CD8-positive, alpha-beta T cell (primary cell): ENCODE measurements at regions of chr10 and their contacts with region 1.

Region 1: GRCh38 chr10:100433253-100434240 is 29.3 kb upstream of the WNT8B start:
- DNase-seq: peak; percentile 90 to 99 (median 93)
- ATAC-seq: peak; percentile 100
- H3K4me3 ChIP-seq: no peak overlapping the region
- H3K4me3 Mint-ChIP-seq: no peak overlapping the region
- H3K27ac ChIP-seq: no peak overlapping the region
- H3K27ac Mint-ChIP-seq: no peak overlapping the region
- H3K4me1 ChIP-seq: no peaks in the 10 kb centered on the region
- H3K4me1 Mint-ChIP-seq: peaks cover 2% of the 10 kb centered on the region
- H3K27me3 ChIP-seq: no peaks in the 10 kb centered on the region
- H3K27me3 Mint-ChIP-seq: no peaks in the 10 kb centered on the region
- CTCF ChIP-seq: peak; percentile 98

Region 2: DNA sequence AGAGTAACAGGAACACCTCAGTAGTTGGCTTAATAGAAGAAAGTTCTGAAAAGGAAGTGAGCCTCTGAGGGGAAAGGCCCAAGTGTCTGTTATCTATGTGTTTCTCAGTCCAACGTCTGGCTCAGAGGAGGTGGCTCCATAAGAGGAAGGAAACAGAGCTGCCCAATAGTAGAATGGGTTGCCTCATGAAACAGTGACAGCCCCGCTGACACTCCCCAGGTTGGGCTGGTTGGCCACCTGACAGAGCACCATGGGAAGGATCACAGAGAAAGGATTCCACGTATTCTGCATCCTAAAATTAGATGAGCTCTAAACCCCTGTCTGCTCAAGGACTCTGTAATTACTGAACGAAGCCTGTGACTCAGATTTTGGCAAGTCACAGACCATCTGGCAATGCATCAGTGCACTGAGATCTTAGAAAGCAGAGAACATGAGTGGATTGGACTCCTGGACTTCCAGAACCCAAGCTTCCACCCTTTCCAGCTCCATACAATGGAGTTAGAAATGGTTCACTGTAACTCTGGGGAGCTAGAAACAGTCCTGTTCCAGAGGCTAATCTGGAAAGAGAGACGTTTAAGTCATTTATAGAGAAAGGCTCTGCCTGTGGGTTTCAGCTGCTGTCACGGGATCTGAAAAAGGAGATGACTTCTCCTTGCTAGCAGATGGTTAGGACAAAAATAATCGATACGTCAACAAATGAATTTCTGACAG is 106.4 kb before region 1 on chr10:
- CTCF ChIA-PET with region 1: interaction called, 225 read pairs
- POLR2A ChIA-PET with region 1: no interaction called
- intact Hi-C with region 1: no loop called
- DNase-seq: peak in 1 of 9 experiments; percentile 62
- ATAC-seq: peak; percentile 89
- H3K4me3 ChIP-seq: no peak overlapping the region
- H3K4me3 Mint-ChIP-seq: no peak overlapping the region
- H3K27ac ChIP-seq: no peak overlapping the region
- H3K27ac Mint-ChIP-seq: peak overlapping the region; percentile 75
- H3K4me1 ChIP-seq: peaks cover 15% of the 10 kb centered on the region
- H3K4me1 Mint-ChIP-seq: peaks cover 10% of the 10 kb centered on the region
- H3K27me3 ChIP-seq: peaks cover 0 to 4% of the 10 kb centered on the region in 2 experiments
- H3K27me3 Mint-ChIP-seq: peaks cover 11% of the 10 kb centered on the region
- CTCF ChIP-seq: no peak

Region 3: DNA sequence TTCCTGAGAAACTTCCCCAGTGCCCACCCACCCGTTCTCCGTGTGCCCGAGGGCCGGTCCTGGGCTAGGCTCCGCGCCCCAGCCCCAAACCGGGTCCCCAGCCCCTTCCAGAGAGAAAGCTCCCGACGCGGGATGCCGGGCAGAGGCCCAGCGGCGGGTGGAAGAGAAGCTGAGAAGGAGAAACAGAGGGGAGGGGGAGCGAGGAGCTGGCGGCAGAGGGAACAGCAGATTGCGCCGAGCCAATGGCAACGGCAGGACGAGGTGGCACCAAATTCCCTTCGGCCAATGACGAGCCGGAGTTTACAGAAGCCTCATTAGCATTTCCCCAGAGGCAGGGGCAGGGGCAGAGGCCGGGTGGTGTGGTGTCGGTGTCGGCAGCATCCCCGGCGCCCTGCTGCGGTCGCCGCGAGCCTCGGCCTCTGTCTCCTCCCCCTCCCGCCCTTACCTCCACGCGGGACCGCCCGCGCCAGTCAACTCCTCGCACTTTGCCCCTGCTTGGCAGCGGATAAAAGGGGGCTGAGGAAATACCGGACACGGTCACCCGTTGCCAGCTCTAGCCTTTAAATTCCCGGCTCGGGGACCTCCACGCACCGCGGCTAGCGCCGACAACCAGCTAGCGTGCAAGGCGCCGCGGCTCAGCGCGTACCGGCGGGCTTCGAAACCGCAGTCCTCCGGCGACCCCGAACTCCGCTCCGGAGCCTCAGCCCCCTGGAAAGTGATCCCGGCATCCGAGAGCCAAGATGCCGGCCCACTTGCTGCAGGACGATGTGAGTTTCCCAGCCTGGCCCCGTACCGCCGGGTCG is 86.6 kb before region 1 on chr10 and contains the start of gene SCD:
- CTCF ChIA-PET with region 1: interaction called, 225 read pairs
- POLR2A ChIA-PET with region 1: interaction called, 6 read pairs
- intact Hi-C with region 1: loop called (anchors 1 kb)
- DNase-seq: peak; percentile 46 to 91 (median 72)
- ATAC-seq: peak; percentile 86
- H3K4me3 ChIP-seq: peak within 1 kb of the TSS; percentile 63 to 79
- H3K4me3 Mint-ChIP-seq: peak within 1 kb of the TSS; percentile 93
- H3K27ac ChIP-seq: peak within 1 kb of the TSS in 1 of 2 experiments; percentile 36
- H3K27ac Mint-ChIP-seq: peak within 1 kb of the TSS; percentile 60
- H3K4me1 ChIP-seq: peaks cover 6% of the 10 kb centered on the region
- H3K4me1 Mint-ChIP-seq: peaks cover 31% of the 10 kb centered on the region
- H3K27me3 ChIP-seq: no peaks in the 10 kb centered on the region
- H3K27me3 Mint-ChIP-seq: no peaks in the 10 kb centered on the region
- CTCF ChIP-seq: no peak
- total RNA-seq, gene SCD: 5.4 TPM

Region 4: GRCh38 chr10:100373298-100374136 is 60.0 kb before region 1 on chr10:
- CTCF ChIA-PET with region 1: interaction called, 7 read pairs
- POLR2A ChIA-PET with region 1: no interaction called
- intact Hi-C with region 1: loop called in 1 of 2 experiments (anchors 1 kb)
- DNase-seq: peak; percentile 66 to 93 (median 84)
- ATAC-seq: peak; percentile 63
- H3K4me3 ChIP-seq: peak overlapping the region; percentile 74 to 91
- H3K4me3 Mint-ChIP-seq: no peak overlapping the region
- H3K27ac ChIP-seq: peak overlapping the region; percentile 90 to 94
- H3K27ac Mint-ChIP-seq: no peak overlapping the region
- H3K4me1 ChIP-seq: peaks cover 44% of the 10 kb centered on the region
- H3K4me1 Mint-ChIP-seq: peaks cover 31% of the 10 kb centered on the region
- H3K27me3 ChIP-seq: no peaks in the 10 kb centered on the region
- H3K27me3 Mint-ChIP-seq: no peaks in the 10 kb centered on the region
- CTCF ChIP-seq: no peak

Region 5: DNA sequence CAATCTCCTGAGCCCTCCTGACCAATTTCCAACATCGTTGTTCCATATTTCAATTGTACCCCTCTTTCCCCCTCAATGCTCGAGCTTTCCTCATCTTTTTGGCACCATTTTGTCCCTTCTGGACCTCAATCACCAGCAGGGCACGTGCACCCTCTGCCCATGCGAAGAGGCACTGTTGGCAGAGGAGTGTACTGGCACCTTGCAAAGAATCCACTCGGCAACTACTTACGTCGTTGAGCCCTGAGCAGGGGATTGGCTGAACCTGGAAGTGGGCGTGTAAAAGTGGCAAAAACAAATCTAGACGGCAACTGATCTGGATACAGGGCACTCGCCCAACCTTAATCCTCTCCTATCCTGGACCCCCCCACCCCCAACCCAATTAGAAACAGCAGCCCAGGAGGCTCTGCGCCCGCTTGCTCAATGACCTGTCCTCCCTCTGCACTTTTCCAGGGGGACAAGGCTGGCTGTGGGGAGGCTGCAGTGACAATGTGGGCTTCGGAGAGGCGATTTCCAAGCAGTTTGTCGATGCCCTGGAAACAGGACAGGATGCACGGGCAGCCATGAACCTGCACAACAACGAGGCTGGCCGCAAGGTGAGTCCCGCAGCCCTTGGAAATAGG is 48.0 kb after region 1 on chr10:
- CTCF ChIA-PET with region 1: interaction called, 13 read pairs
- POLR2A ChIA-PET with region 1: no interaction called
- intact Hi-C with region 1: loop called (anchors 1 to 5 kb)
- DNase-seq: peak; percentile 85 to 98 (median 90)
- ATAC-seq: peak; percentile 97
- H3K4me3 ChIP-seq: peak overlapping the region; percentile 61 to 74
- H3K4me3 Mint-ChIP-seq: peak overlapping the region; percentile 87
- H3K27ac ChIP-seq: peak overlapping the region in 1 of 2 experiments; percentile 21
- H3K27ac Mint-ChIP-seq: no peak overlapping the region
- H3K4me1 ChIP-seq: peaks cover 10% of the 10 kb centered on the region
- H3K4me1 Mint-ChIP-seq: peaks cover 19% of the 10 kb centered on the region
- H3K27me3 ChIP-seq: no peaks in the 10 kb centered on the region
- H3K27me3 Mint-ChIP-seq: peaks cover 22% of the 10 kb centered on the region
- CTCF ChIP-seq: no peak

Region 6: DNA sequence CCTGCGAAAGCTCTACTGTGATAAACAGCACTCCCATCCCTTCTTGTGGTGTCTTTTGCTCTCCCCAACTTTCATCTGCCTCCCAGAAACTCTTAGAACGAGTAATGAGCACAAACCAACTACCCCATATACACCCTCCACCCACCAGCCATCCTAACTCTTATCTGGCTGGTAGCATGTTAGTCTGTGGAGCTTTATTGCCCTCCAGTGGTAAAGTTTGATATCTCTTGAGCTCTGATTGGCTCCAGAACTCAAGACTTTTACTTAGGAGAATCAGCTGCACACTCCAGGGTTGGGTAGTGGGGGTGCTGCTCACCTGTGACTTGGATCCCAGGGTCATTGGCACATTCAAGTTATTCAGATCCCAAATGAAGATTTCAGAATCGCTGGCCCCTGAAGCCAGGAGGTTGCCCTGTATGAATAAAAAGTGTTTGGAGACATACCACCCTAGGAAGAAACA is 75.2 kb after region 1 on chr10:
- CTCF ChIA-PET with region 1: interaction called, 298 read pairs
- POLR2A ChIA-PET with region 1: no interaction called
- intact Hi-C with region 1: loop called (anchors 1 kb)
- DNase-seq: peak in 6 of 9 experiments; percentile 40 to 85 (median 50)
- ATAC-seq: peak; percentile 45
- H3K4me3 ChIP-seq: peak overlapping the region in 1 of 2 experiments; percentile 10
- H3K4me3 Mint-ChIP-seq: peak overlapping the region; percentile 66
- H3K27ac ChIP-seq: peak overlapping the region; percentile 25 to 62
- H3K27ac Mint-ChIP-seq: peak overlapping the region; percentile 94
- H3K4me1 ChIP-seq: peaks cover 63% of the 10 kb centered on the region
- H3K4me1 Mint-ChIP-seq: peaks cover 73% of the 10 kb centered on the region
- H3K27me3 ChIP-seq: no peaks in the 10 kb centered on the region
- H3K27me3 Mint-ChIP-seq: no peaks in the 10 kb centered on the region
- CTCF ChIP-seq: peak; percentile 76

Region 7: GRCh38 chr10:100529475-100530298 is 96.1 kb after region 1 on chr10 and contains the start of gene NDUFB8:
- CTCF ChIA-PET with region 1: interaction called, 298 read pairs
- POLR2A ChIA-PET with region 1: no interaction called
- intact Hi-C with region 1: no loop called
- DNase-seq: peak; percentile 74 to 92 (median 87)
- ATAC-seq: peak; percentile 84
- H3K4me3 ChIP-seq: peak within 1 kb of the TSS; percentile 81 to 99
- H3K4me3 Mint-ChIP-seq: peak within 1 kb of the TSS; percentile 99
- H3K27ac ChIP-seq: peak within 1 kb of the TSS; percentile 77 to 83
- H3K27ac Mint-ChIP-seq: peak within 1 kb of the TSS; percentile 93
- H3K4me1 ChIP-seq: peaks cover 35% of the 10 kb centered on the region
- H3K4me1 Mint-ChIP-seq: peaks cover 38% of the 10 kb centered on the region
- H3K27me3 ChIP-seq: no peaks in the 10 kb centered on the region
- H3K27me3 Mint-ChIP-seq: no peaks in the 10 kb centered on the region
- CTCF ChIP-seq: no peak
- total RNA-seq, gene NDUFB8: 156 to 163 TPM

Region 8: DNA sequence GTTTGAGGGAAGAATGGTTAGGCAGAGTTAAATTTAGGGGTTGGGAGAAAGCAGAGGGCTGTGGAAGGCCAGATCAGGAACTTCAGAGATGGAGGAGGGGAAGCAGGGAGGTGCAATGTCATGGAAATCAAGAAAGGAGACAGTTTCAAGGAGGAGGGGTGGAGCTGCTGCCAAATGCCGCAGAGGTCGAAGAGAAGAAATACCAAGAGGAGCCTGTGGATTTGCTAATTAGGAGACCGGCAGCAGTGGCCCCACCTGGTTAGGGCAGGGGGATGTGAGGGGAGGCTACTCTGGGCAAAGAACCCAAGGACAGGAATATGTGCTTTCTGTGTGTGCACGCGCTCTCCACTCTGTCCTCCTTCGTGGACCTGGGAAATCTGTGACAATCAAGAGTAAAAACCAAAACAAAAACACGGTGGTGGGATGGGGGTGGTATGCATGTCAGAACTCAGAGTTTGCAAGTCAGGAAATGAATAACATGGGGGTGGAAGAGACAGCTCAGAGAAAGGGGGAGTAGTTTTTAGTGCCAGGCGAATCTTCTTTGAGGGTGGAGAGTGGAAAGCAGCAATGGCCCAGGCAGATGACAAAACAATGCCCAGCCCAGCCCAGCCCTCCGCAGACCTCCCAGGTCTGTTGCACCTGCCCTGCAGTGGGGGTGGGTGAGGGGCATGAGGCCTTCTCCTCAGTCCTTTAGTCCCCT is 208.9 kb after region 1 on chr10:
- CTCF ChIA-PET with region 1: no interaction called
- POLR2A ChIA-PET with region 1: no interaction called
- intact Hi-C with region 1: no loop called
- DNase-seq: no peak
- ATAC-seq: no peak
- H3K4me3 ChIP-seq: no peak overlapping the region
- H3K4me3 Mint-ChIP-seq: no peak overlapping the region
- H3K27ac ChIP-seq: no peak overlapping the region
- H3K27ac Mint-ChIP-seq: no peak overlapping the region
- H3K4me1 ChIP-seq: no peaks in the 10 kb centered on the region
- H3K4me1 Mint-ChIP-seq: no peaks in the 10 kb centered on the region
- H3K27me3 ChIP-seq: peaks cover 0 to 3% of the 10 kb centered on the region in 2 experiments
- H3K27me3 Mint-ChIP-seq: peaks cover 70% of the 10 kb centered on the region
- CTCF ChIP-seq: no peak

Region 9: GRCh38 chr10:100653957-100654781 is 220.6 kb after region 1 on chr10:
- CTCF ChIA-PET with region 1: no interaction called
- POLR2A ChIA-PET with region 1: no interaction called
- intact Hi-C with region 1: no loop called
- DNase-seq: peak in 3 of 9 experiments; percentile 16 to 35 (median 21)
- ATAC-seq: peak; percentile 26
- H3K4me3 ChIP-seq: peak overlapping the region; percentile 20 to 45
- H3K4me3 Mint-ChIP-seq: peak overlapping the region; percentile 81
- H3K27ac ChIP-seq: no peak overlapping the region
- H3K27ac Mint-ChIP-seq: no peak overlapping the region
- H3K4me1 ChIP-seq: peaks cover 22% of the 10 kb centered on the region
- H3K4me1 Mint-ChIP-seq: peaks cover 25% of the 10 kb centered on the region
- H3K27me3 ChIP-seq: peaks cover 28 to 32% of the 10 kb centered on the region in 2 experiments
- H3K27me3 Mint-ChIP-seq: peaks cover 61% of the 10 kb centered on the region
- CTCF ChIP-seq: no peak